Endothelial cell of umbilical vein (primary cell): ENCODE measurements at regions of chr20 and their contacts with region 1.

Region 1: DNA sequence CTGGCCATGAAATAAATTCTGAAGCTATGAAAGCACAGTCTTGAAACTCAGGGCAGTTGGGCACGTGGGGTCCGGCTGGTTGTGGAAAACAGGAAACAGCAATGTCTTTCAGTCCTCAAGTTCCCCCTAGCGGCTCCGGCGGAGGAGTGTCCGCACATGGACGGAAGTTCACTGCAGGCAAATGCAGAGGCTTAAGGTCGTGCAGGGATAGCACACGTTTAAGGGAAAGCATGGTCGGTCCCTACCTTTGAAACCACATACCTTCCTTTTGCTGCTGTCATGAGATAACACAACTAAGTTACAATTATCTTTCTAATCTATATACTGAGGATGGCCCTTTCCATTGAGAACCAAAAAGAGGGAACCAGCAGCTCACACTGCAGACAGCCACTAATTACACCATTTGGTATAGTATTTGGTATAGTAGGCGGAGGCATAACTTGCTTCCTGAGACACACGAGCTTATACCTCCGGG is 52.6 kb upstream of the NFATC2 start:
- DNase-seq: peak; percentile 94
- H3K4me3 ChIP-seq: no peak overlapping the region
- H3K27ac ChIP-seq: peak overlapping the region; percentile 41
- H3K4me1 ChIP-seq: peaks cover 27% of the 10 kb centered on the region
- H3K27me3 ChIP-seq: no peaks in the 10 kb centered on the region
- CTCF ChIP-seq: peak; percentile 83 to 87
- POLR2A ChIP-seq: no peak

Region 2: GRCh38 chr20:51306503-51307358 is 288.4 kb before region 1 on chr20:
- CTCF ChIA-PET with region 1: interaction called, 11 read pairs
- POLR2A ChIA-PET with region 1: no interaction called
- dilution Hi-C with region 1: no loop called
- intact Hi-C with region 1: loop called (anchors 5 kb)
- DNase-seq: peak; percentile 63
- H3K4me3 ChIP-seq: no peak overlapping the region
- H3K27ac ChIP-seq: no peak overlapping the region
- H3K4me1 ChIP-seq: no peaks in the 10 kb centered on the region
- H3K27me3 ChIP-seq: peaks cover 0 to 3% of the 10 kb centered on the region in 2 experiments
- CTCF ChIP-seq: peak; percentile 91 to 96
- POLR2A ChIP-seq: no peak

Region 3: GRCh38 chr20:51385646-51386530 is 209.2 kb before region 1 on chr20:
- CTCF ChIA-PET with region 1: interaction called, 139 read pairs
- POLR2A ChIA-PET with region 1: interaction called, 3 read pairs
- dilution Hi-C with region 1: no loop called
- intact Hi-C with region 1: loop called (anchors 1 kb)
- DNase-seq: peak; percentile 67
- H3K4me3 ChIP-seq: no peak overlapping the region
- H3K27ac ChIP-seq: no peak overlapping the region
- H3K4me1 ChIP-seq: peaks cover 63% of the 10 kb centered on the region
- H3K27me3 ChIP-seq: no peaks in the 10 kb centered on the region
- CTCF ChIP-seq: peak; percentile 52 to 78
- POLR2A ChIP-seq: no peak

Region 4: GRCh38 chr20:51447097-51447771 is 147.9 kb before region 1 on chr20:
- CTCF ChIA-PET with region 1: interaction called, 24 read pairs
- POLR2A ChIA-PET with region 1: no interaction called
- dilution Hi-C with region 1: no loop called
- intact Hi-C with region 1: loop called (anchors 2 kb)
- DNase-seq: peak; percentile 95
- H3K4me3 ChIP-seq: peak overlapping the region in 1 of 3 experiments; percentile 3
- H3K27ac ChIP-seq: peak overlapping the region; percentile 83
- H3K4me1 ChIP-seq: peaks cover 20% of the 10 kb centered on the region
- H3K27me3 ChIP-seq: no peaks in the 10 kb centered on the region
- CTCF ChIP-seq: no peak
- POLR2A ChIP-seq: no peak

Region 5: GRCh38 chr20:51525241-51526129 is 69.6 kb before region 1 on chr20:
- CTCF ChIA-PET with region 1: interaction called, 14 read pairs
- POLR2A ChIA-PET with region 1: interaction called, 4 read pairs
- dilution Hi-C with region 1: no loop called
- intact Hi-C with region 1: no loop called
- DNase-seq: peak; percentile 45
- H3K4me3 ChIP-seq: no peak overlapping the region
- H3K27ac ChIP-seq: no peak overlapping the region
- H3K4me1 ChIP-seq: peaks cover 10% of the 10 kb centered on the region
- H3K27me3 ChIP-seq: no peaks in the 10 kb centered on the region
- CTCF ChIP-seq: no peak
- POLR2A ChIP-seq: no peak

Region 6: DNA sequence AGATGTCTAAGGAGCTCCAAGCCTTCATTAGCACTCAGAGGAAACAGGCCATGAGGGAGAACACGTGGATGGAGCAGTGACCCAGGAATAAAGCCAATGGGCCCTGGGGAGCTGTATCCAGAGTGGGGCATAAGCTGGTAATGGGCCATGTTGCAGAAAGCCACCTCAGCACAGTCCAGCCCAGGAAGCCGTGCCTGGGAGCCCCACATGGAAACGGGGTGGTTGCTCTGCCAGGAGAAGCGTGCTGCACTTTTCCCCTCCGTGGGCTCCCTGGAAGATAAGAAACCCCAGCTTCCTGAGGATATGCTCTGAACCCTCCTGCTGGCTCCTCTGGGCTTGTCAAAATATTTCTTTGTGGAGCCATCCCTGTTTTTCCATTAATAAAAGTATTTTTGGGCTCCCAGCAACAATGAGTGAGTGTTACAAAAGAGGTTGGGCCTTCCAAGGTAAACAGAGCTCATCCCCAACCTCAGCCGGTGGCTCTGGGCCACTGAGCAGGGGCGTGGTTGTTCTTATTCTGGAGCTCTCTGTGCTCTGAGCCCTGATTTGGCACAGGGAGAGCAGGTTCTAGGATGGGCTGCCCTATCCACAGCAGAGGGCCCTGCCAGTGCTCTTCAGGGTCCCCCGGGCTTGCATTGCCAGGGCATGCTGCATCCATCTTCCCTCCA is 21.4 kb before region 1 on chr20:
- CTCF ChIA-PET with region 1: interaction called, 32 read pairs
- POLR2A ChIA-PET with region 1: no interaction called
- dilution Hi-C with region 1: no loop called
- intact Hi-C with region 1: no loop called
- DNase-seq: peak; percentile 45
- H3K4me3 ChIP-seq: no peak overlapping the region
- H3K27ac ChIP-seq: no peak overlapping the region
- H3K4me1 ChIP-seq: peaks cover 13% of the 10 kb centered on the region
- H3K27me3 ChIP-seq: peaks cover 0 to 2% of the 10 kb centered on the region in 2 experiments
- CTCF ChIP-seq: no peak
- POLR2A ChIP-seq: no peak

Region 7: GRCh38 chr20:51678026-51678697 is 83.1 kb after region 1 on chr20:
- CTCF ChIA-PET with region 1: no interaction called
- POLR2A ChIA-PET with region 1: no interaction called
- dilution Hi-C with region 1: no loop called
- intact Hi-C with region 1: no loop called
- DNase-seq: no peak
- H3K4me3 ChIP-seq: no peak overlapping the region
- H3K27ac ChIP-seq: no peak overlapping the region
- H3K4me1 ChIP-seq: no peaks in the 10 kb centered on the region
- H3K27me3 ChIP-seq: no peaks in the 10 kb centered on the region
- CTCF ChIP-seq: no peak
- POLR2A ChIP-seq: no peak